GM12878 (cell line): ENCODE measurements at regions of chr4 and their contacts with region 1.

Region 1: GRCh38 chr4:6783053-6783981 is 790 bp downstream of the KIAA0232 start:
- DNase-seq: peak; percentile 27
- ATAC-seq: peak; percentile 87
- H3K4me3 ChIP-seq: peak overlapping the region; percentile 89
- H3K27ac ChIP-seq: peak overlapping the region; percentile 88
- H3K4me1 ChIP-seq: 0 out of 2 replicates have a peak, but pooled peaks cover 6% of the 10 kb centered on the region
- H3K27me3 ChIP-seq: no peaks in the 10 kb centered on the region
- CTCF ChIP-seq: peak; percentile 19 to 42 (median 25); a peak in 3 of 6 replicates
- EP300 ChIP-seq: no peak
- POLR2A ChIP-seq: peak; percentile 78; the same call in 1 of the 2 replicates
- RAD21 ChIP-seq: peak; percentile 15; the same call in 1 of the 2 replicates

Region 2: GRCh38 chr4:6768539-6768905 is 14.8 kb before region 1 on chr4:
- CTCF ChIA-PET with region 1: interaction called, 5 read pairs
- POLR2A ChIA-PET with region 1: interaction called, 7 read pairs
- RAD21 ChIA-PET with region 1: interaction called, 13 read pairs
- SMC1A ChIA-PET with region 1: interaction called, 10 read pairs
- in situ Hi-C with region 1: no loop called
- intact Hi-C with region 1: no loop called
- DNase-seq: no peak
- ATAC-seq: no peak
- H3K4me3 ChIP-seq: no peak overlapping the region
- H3K27ac ChIP-seq: no peak overlapping the region
- H3K4me1 ChIP-seq: peaks cover 14% of the 10 kb centered on the region
- H3K27me3 ChIP-seq: no peaks in the 10 kb centered on the region
- CTCF ChIP-seq: no peak
- EP300 ChIP-seq: no peak
- POLR2A ChIP-seq: no peak
- RAD21 ChIP-seq: no peak

Region 3: DNA sequence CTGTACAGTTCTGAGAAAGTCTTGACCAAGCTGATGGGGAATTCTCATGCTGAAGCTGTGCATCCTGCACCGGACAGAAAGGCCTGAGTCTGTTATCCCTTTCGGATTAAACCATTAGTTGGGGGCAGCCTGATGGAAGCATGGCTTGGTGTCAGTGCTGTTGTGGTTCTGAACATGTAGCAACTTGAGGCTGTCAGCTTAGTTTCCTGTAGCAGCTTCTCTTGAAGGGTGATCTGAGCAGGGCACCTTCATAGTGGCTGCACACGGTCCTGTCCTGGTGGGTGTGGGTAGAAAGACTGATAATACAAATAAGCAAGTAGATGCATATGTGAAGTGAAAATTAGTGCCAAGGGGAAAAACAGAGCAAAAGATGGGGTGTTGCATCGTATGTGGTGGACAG is 10.9 kb after region 1 on chr4:
- CTCF ChIA-PET with region 1: interaction called, 5 read pairs
- POLR2A ChIA-PET with region 1: interaction called, 17 read pairs
- RAD21 ChIA-PET with region 1: interaction called, 4 read pairs
- SMC1A ChIA-PET with region 1: interaction called, 11 read pairs
- in situ Hi-C with region 1: no loop called
- intact Hi-C with region 1: no loop called
- DNase-seq: no peak
- ATAC-seq: peak; percentile 22; the same call in 2 of the 3 replicates
- H3K4me3 ChIP-seq: no peak overlapping the region
- H3K27ac ChIP-seq: no peak overlapping the region
- H3K4me1 ChIP-seq: peaks cover 4% of the 10 kb centered on the region; the same call in 1 of the 2 replicates
- H3K27me3 ChIP-seq: no peaks in the 10 kb centered on the region
- CTCF ChIP-seq: no peak
- EP300 ChIP-seq: no peak
- POLR2A ChIP-seq: no peak
- RAD21 ChIP-seq: no peak

Region 4: DNA sequence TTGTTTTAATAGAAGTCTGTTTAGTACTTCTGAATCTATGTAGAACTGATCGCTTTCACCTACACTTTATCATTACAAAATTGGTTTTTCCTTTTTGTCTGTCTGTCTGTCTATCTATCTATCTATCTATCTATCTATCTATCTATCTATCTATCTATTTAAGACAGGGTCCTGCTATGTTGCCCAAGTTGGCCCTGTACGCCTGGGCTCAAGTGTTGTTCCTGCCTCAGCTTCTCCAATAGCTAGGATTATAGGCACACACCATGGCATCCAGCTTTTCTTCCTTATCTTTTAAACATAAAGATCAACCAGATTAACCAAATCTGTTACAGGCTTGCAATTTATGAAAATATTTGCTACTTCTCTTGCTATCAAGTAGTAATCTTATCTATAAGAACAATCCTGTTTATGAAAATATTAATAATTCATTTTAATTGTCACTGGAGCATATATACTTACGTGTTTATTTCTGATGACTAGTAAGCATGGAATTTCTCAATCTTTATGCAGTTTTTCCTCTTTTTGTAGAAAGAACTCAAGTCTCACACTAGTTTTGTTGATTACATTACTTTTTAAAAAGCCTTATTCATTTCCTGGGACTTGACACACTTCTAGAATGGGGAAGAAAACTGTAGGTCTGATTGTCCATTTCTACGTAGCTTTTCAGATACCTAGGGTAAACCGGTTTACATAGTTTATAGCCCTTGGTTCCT is 23.8 kb after region 1 on chr4:
- CTCF ChIA-PET with region 1: interaction called, 4 read pairs
- POLR2A ChIA-PET with region 1: interaction called, 8 read pairs
- RAD21 ChIA-PET with region 1: no interaction called
- SMC1A ChIA-PET with region 1: interaction called, 15 read pairs
- in situ Hi-C with region 1: no loop called
- intact Hi-C with region 1: no loop called
- DNase-seq: no peak
- ATAC-seq: no peak
- H3K4me3 ChIP-seq: no peak overlapping the region
- H3K27ac ChIP-seq: no peak overlapping the region
- H3K4me1 ChIP-seq: no peaks in the 10 kb centered on the region
- H3K27me3 ChIP-seq: no peaks in the 10 kb centered on the region
- CTCF ChIP-seq: no peak
- EP300 ChIP-seq: no peak
- POLR2A ChIP-seq: no peak
- RAD21 ChIP-seq: no peak

Region 5: GRCh38 chr4:6855692-6856297 is 72.5 kb after region 1 on chr4:
- CTCF ChIA-PET with region 1: interaction called, 9 read pairs
- POLR2A ChIA-PET with region 1: interaction called, 10 read pairs
- RAD21 ChIA-PET with region 1: interaction called, 32 read pairs
- SMC1A ChIA-PET with region 1: interaction called, 21 read pairs
- in situ Hi-C with region 1: no loop called
- intact Hi-C with region 1: loop called (anchors 2 kb)
- DNase-seq: peak; percentile 94
- ATAC-seq: peak; percentile 94
- H3K4me3 ChIP-seq: no peak overlapping the region
- H3K27ac ChIP-seq: peak overlapping the region; percentile 58
- H3K4me1 ChIP-seq: peaks cover 18% of the 10 kb centered on the region
- H3K27me3 ChIP-seq: no peaks in the 10 kb centered on the region
- CTCF ChIP-seq: no peak
- EP300 ChIP-seq: peak; percentile 97 to 98
- POLR2A ChIP-seq: peak; percentile 24; the same call in 1 of the 2 replicates
- RAD21 ChIP-seq: no peak